H1 (cell line): ENCODE measurements at regions of chr11 and their contacts with region 1.

Region 1: GRCh38 chr11:88231894-88232482 is 56.7 kb upstream of the RAB38 start:
- DNase-seq: no peak
- H3K4me3 ChIP-seq: no peak overlapping the region
- H3K27ac ChIP-seq: no peak overlapping the region
- H3K4me1 ChIP-seq: 0 out of 7 replicates have a peak, but pooled peaks cover 0 to 2% (median 0%) of the 10 kb centered on the region in 4 experiments
- H3K27me3 ChIP-seq: no peaks in the 10 kb centered on the region
- CTCF ChIP-seq: peak in 2 of 3 experiments; percentile 58 to 73; a peak in 3 of 4 replicates
- EP300 ChIP-seq: no peak
- POLR2A ChIP-seq: no peak
- RAD21 ChIP-seq: peak; percentile 64 to 71

Region 2: GRCh38 chr11:88042238-88042637 is 189.8 kb before region 1 on chr11:
- CTCF ChIA-PET with region 1: no interaction called
- POLR2A ChIA-PET with region 1: no interaction called
- DNase-seq: no peak
- H3K4me3 ChIP-seq: no peak overlapping the region
- H3K27ac ChIP-seq: no peak overlapping the region
- H3K4me1 ChIP-seq: peaks cover 0 to 11% (median 4%) of the 10 kb centered on the region in 4 experiments; a peak in 5 of 7 replicates
- H3K27me3 ChIP-seq: no peaks in the 10 kb centered on the region
- CTCF ChIP-seq: no peak
- EP300 ChIP-seq: no peak
- POLR2A ChIP-seq: no peak
- RAD21 ChIP-seq: no peak

Region 3: DNA sequence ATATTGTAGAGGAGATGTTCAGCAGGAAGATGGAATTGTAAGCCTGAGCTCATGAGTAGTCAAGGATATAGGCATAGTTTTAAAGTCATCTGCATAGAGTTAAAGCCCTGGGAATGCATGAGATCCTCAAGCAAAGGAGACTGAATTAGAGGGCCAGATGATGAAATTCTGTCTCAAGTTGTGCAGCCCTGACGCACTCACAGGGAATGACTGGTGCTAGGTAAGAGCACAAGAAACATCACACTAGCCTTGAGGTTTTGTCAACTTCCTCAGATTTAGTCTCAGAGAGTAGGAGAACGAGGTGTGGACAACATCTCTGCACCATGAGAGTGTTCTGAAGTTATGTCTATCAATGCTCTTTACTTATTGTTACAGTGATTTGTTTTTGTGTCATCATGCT is 62.5 kb before region 1 on chr11:
- CTCF ChIA-PET with region 1: no interaction called
- POLR2A ChIA-PET with region 1: no interaction called
- DNase-seq: no peak
- H3K4me3 ChIP-seq: no peak overlapping the region
- H3K27ac ChIP-seq: no peak overlapping the region
- H3K4me1 ChIP-seq: peaks cover 0 to 2% (median 0%) of the 10 kb centered on the region in 4 experiments; a peak in 2 of 7 replicates
- H3K27me3 ChIP-seq: no peaks in the 10 kb centered on the region
- CTCF ChIP-seq: no peak
- EP300 ChIP-seq: no peak
- POLR2A ChIP-seq: no peak
- RAD21 ChIP-seq: no peak

Region 4: DNA sequence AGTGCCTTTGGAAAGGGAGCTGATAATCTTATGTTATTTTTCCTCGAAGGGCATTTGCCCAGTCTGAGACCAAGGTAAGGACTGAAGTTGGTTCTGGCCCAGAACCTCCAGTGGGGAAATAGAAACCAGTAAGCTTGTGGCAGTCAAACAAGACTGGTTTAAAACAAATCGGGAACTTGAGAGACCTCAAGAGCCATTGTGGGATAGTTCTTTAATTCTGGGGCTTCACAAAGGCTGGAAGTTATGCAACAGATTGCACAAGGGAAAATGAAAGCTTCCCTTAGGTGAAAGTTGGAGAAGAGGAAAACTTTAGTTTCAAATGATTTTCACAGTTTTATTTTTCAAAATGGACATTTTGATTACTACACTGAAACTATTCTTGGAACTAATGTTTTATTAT is 23.2 kb before region 1 on chr11:
- CTCF ChIA-PET with region 1: interaction called, 12 read pairs
- POLR2A ChIA-PET with region 1: no interaction called
- DNase-seq: no peak
- H3K4me3 ChIP-seq: no peak overlapping the region
- H3K27ac ChIP-seq: no peak overlapping the region
- H3K4me1 ChIP-seq: no peaks in the 10 kb centered on the region
- H3K27me3 ChIP-seq: no peaks in the 10 kb centered on the region
- CTCF ChIP-seq: no peak
- EP300 ChIP-seq: no peak
- POLR2A ChIP-seq: no peak
- RAD21 ChIP-seq: no peak

Region 5: DNA sequence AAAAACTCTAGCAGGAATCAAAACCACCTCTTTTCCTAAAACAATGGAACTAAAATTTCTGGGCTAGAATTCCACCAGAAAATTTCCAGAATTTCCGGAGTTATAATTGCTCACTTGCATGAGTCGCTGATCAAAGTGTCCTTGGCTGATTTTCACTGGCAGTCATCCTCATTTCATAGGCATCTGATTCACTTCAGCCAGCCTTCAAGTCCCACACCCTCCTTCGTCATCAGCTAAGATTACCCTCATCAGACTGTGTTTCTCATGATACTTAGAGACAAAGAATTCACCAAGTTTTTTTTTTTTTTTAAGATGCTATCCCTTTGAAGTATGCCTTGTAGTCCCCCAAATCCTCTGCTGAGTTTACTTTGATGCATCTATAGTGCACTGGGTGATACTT is 14.7 kb after region 1 on chr11:
- CTCF ChIA-PET with region 1: interaction called, 42 read pairs
- POLR2A ChIA-PET with region 1: no interaction called
- DNase-seq: no peak
- H3K4me3 ChIP-seq: no peak overlapping the region
- H3K27ac ChIP-seq: no peak overlapping the region
- H3K4me1 ChIP-seq: no peaks in the 10 kb centered on the region
- H3K27me3 ChIP-seq: no peaks in the 10 kb centered on the region
- CTCF ChIP-seq: no peak
- EP300 ChIP-seq: no peak
- POLR2A ChIP-seq: no peak
- RAD21 ChIP-seq: no peak

Region 6: GRCh38 chr11:88538088-88538487 is 306.1 kb after region 1 on chr11:
- CTCF ChIA-PET with region 1: interaction called, 14 read pairs
- POLR2A ChIA-PET with region 1: interaction called, 3 read pairs
- DNase-seq: no peak
- H3K4me3 ChIP-seq: no peak overlapping the region
- H3K27ac ChIP-seq: no peak overlapping the region
- H3K4me1 ChIP-seq: no peaks in the 10 kb centered on the region
- H3K27me3 ChIP-seq: no peaks in the 10 kb centered on the region
- CTCF ChIP-seq: no peak
- EP300 ChIP-seq: no peak
- POLR2A ChIP-seq: no peak
- RAD21 ChIP-seq: no peak